Keratinocyte (primary cell): ENCODE measurements at regions of chr17 and their contacts with region 1.

Region 1: DNA sequence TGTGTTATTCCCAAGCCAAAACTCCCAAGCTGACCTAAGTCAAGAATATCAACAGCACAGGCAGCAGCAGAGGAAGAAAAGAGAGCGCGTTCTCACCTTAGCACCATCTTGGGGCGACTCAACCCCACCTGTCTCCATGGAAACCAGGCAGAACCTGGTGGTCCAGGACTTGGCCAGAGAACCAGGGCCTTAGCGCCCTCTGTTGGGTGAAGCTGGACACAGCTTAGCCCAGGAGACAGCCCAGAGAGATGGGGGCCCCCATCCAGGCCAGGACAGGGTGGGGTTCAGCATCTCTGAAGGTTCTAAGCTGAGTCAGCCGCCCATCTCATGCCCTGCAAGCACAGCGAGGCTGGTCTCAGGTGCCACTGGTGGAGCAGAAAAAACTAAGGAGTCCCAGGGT is 60.1 kb upstream of the TMEM132E start:
- DNase-seq: no peak
- H3K4me3 ChIP-seq: no peak overlapping the region
- H3K27ac ChIP-seq: no peak overlapping the region
- H3K4me1 ChIP-seq: no peaks in the 10 kb centered on the region
- H3K27me3 ChIP-seq: no peaks in the 10 kb centered on the region
- CTCF ChIP-seq: peak; percentile 18 to 47 (median 43)

Region 2: GRCh38 chr17:34420254-34420766 is 99.0 kb before region 1 on chr17:
- dilution Hi-C with region 1: loop called (anchors 25 kb)
- DNase-seq: peak; percentile 30
- H3K4me3 ChIP-seq: no peak overlapping the region
- H3K27ac ChIP-seq: no peak overlapping the region
- H3K4me1 ChIP-seq: no peaks in the 10 kb centered on the region
- H3K27me3 ChIP-seq: peaks cover 16% of the 10 kb centered on the region
- CTCF ChIP-seq: peak; percentile 88 to 92 (median 92)

Region 3: DNA sequence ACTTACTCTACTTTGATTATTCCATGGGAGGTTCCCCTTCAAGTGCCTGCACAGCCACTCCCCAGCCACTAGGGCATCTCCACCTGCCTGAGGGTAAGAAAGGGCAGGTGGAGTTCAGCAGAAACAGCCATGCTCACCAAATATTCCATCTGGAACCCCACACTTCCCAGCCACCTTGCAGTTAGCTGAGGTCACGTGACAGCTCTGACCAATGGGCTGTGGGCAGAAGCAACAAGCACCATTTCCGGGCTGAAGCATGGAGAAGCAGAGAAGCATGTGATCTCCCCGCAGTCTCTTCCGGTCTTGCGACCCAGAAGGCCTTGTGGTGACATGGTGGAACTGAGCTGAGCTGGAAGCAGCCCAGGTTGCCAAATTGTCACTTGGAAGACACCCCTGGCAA is 333.3 kb after region 1 on chr17:
- dilution Hi-C with region 1: loop called (anchors 25 kb)
- DNase-seq: no peak
- H3K4me3 ChIP-seq: no peak overlapping the region
- H3K27ac ChIP-seq: no peak overlapping the region
- H3K4me1 ChIP-seq: no peaks in the 10 kb centered on the region
- H3K27me3 ChIP-seq: no peaks in the 10 kb centered on the region
- CTCF ChIP-seq: peak in 1 of 3 experiments; percentile 17